BJ (cell line): ENCODE measurements at regions of chr1 and their contacts with region 1.

Region 1: DNA sequence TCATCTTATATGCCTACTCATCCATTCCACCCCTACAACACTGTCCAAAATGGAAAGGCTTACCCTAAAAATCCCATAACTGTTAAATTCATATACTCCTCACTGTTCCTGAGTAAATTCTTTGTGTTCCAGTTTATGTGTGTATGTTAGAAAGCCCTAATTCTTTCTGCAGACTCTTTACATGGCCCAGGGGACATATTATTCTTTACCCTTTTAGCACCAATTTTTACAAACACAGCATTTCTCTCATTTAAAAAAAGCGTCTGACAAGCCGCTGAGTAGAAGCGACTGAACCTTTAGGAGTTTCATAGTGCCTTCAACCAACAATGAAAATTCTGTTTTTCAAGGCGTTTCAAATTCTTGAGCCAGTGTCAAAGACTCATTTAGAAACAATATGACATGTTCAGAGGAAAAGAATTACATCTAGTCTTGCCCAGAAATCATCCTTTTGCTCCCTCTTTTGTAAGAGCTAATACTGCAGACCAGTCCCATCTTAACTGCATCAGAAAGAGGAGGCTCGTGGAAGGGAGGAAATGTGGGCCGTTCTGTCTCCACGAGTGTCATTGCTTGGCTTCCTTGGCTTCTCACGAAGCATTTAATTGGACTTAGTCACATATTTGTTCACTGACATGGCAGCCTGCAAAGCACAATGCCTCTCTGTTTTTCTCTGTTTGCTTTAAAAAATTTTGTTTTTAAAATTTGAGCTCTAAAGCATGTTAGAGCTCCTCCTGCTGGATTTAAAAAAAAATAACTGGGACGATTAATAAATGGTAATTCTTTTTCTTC is 21.3 kb upstream of the C1orf105 start:
- DNase-seq: peak; percentile 94
- H3K4me3 ChIP-seq: no peak overlapping the region
- H3K27me3 ChIP-seq: no peaks in the 10 kb centered on the region
- CTCF ChIP-seq: peak; percentile 36

Region 2: GRCh38 chr1:172089768-172090510 is 309.2 kb before region 1 on chr1:
- CTCF ChIA-PET with region 1: interaction called, 19 read pairs
- POLR2A ChIA-PET with region 1: no interaction called
- DNase-seq: no peak
- H3K4me3 ChIP-seq: no peak overlapping the region
- H3K27me3 ChIP-seq: no peaks in the 10 kb centered on the region
- CTCF ChIP-seq: peak; percentile 79